Activated B cell treated with CpG ODN at 0.5 μM for 24 hours (primary cell): ENCODE measurements at regions of chr1 and their contacts with region 1.

Region 1: GRCh38 chr1:42846257-42847110 is at the start of gene ZNF691:
- DNase-seq: peak; percentile 63
- ATAC-seq: peak; percentile 97
- H3K4me3 Mint-ChIP-seq: peak within 1 kb of the TSS; percentile 94
- H3K27ac Mint-ChIP-seq: peak within 1 kb of the TSS; percentile 83
- H3K4me1 Mint-ChIP-seq: peaks cover 43% of the 10 kb centered on the region
- H3K27me3 Mint-ChIP-seq: no peaks in the 10 kb centered on the region
- CTCF ChIP-seq: no peak
- total RNA-seq, gene ZNF691: 13.1 and 16.1 TPM in 2 replicates

Region 2: DNA sequence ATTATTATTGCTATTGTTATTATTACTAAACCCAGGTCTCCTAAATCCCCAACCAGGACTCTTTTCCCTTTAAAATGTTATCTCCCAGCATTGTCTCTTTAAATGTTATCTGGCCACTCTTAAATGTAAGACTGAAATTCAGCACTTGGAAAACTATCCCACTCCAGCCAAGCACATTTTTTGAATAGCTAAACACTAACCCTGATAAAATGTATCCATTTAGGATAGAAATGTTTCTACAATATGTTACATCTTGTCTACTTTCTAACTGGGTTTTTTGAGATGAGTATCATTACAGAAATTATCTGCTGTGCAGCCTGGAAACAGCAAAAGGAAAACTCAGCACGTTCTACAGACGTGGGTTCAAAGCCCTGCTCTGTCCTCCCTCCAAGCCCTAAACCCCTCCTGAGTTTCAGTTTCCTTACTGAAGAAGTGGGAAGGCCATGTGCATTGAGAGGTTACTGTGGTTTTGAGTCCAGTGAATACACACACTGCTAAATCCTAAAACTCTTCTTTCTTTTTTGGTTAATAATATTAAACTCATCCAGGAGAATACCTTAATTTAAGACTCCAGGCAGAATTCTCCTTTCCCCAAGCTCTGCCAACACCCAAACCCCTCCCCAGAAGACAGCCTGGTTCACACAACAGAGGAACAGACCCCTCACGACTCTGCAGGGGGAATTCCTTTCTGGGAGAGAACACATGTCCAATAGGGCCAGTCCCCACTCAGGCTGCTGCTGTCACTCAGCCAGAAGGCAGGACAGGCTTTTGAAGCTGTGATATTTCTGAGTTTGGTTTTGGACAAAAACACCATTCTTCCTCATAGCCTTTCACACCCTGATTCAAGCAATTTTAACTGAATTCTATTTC is 969.7 kb before region 1 on chr1:
- CTCF ChIA-PET with region 1: no interaction called
- POLR2A ChIA-PET with region 1: no interaction called
- intact Hi-C with region 1: no loop called
- DNase-seq: no peak
- ATAC-seq: no peak
- H3K4me3 Mint-ChIP-seq: no peak overlapping the region
- H3K27ac Mint-ChIP-seq: no peak overlapping the region
- H3K4me1 Mint-ChIP-seq: no peaks in the 10 kb centered on the region
- H3K27me3 Mint-ChIP-seq: no peaks in the 10 kb centered on the region
- CTCF ChIP-seq: no peak

Region 3: DNA sequence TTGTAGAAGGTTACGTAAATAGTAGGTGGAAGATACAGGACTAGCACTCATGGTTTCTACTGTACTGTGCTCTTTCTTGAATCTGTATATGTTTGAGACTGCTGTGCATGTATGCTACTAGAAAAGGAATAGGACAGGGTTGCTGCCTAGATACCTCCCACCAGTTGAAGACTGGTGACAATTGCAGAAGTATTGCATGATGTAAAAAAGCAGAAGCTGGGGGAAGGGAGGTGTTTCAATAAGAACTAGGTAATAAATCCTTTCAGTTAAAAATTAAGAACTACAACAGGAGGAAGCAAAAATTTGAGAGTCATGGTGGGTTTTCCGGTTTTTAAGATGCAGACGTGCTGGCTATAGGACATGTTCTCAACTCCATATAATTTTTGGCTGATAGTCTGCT is 295.3 kb before region 1 on chr1:
- CTCF ChIA-PET with region 1: no interaction called
- POLR2A ChIA-PET with region 1: no interaction called
- intact Hi-C with region 1: no loop called
- DNase-seq: no peak
- ATAC-seq: peak; percentile 70
- H3K4me3 Mint-ChIP-seq: no peak overlapping the region
- H3K27ac Mint-ChIP-seq: no peak overlapping the region
- H3K4me1 Mint-ChIP-seq: peaks cover 4% of the 10 kb centered on the region
- H3K27me3 Mint-ChIP-seq: peaks cover 4% of the 10 kb centered on the region
- CTCF ChIP-seq: no peak

Region 4: GRCh38 chr1:42816585-42817434 is 29.7 kb before region 1 on chr1 and contains the starts of genes ERMAP and SVBP:
- CTCF ChIA-PET with region 1: no interaction called
- POLR2A ChIA-PET with region 1: interaction called, 16 read pairs
- intact Hi-C with region 1: loop called (anchors 1 kb)
- DNase-seq: peak; percentile 97
- ATAC-seq: peak; percentile 88
- H3K4me3 Mint-ChIP-seq: peak within 1 kb of the TSS; percentile 86
- H3K27ac Mint-ChIP-seq: peak within 1 kb of the TSS; percentile 86
- H3K4me1 Mint-ChIP-seq: peaks cover 20% of the 10 kb centered on the region
- H3K27me3 Mint-ChIP-seq: no peaks in the 10 kb centered on the region
- CTCF ChIP-seq: no peak
- total RNA-seq, gene ERMAP: 7.1 and 10.7 TPM in 2 replicates
- total RNA-seq, gene SVBP: 21.5 and 22.4 TPM in 2 replicates

Region 5: DNA sequence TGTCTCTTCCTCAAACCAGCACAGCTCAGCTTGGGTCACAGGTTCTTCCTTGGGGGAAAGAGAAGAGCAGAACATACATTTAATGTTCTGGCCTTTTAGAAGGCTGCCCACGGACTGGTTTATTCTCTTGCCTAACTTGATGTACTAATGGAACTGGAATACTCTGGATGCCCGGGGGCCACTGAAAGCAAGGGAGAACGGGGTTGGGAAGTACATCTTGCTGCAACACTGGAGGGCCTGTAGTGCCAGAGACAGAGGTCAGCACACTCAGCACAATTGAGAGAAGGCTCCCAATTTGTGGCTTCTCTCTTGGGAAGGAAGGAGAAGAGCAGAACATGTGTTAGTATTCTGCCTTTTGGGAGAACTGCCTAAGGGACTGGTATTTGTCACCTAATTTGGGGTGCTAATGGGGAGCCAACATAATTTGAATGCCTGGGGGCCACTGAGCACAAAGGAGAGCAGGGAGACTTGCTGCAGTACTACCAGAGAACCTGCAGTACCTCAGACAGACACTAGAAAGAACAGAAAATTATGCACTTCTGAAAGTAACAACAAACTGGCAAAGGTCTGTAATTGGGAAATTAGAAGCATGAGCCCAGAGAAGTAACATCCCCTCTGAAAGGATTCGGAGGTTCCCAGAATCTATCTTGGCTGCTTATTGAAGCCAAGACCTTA is 14.0 kb after region 1 on chr1:
- CTCF ChIA-PET with region 1: interaction called, 3 read pairs
- POLR2A ChIA-PET with region 1: interaction called, 12 read pairs
- intact Hi-C with region 1: no loop called
- DNase-seq: no peak
- ATAC-seq: no peak
- H3K4me3 Mint-ChIP-seq: no peak overlapping the region
- H3K27ac Mint-ChIP-seq: no peak overlapping the region
- H3K4me1 Mint-ChIP-seq: no peaks in the 10 kb centered on the region
- H3K27me3 Mint-ChIP-seq: peaks cover 24% of the 10 kb centered on the region
- CTCF ChIP-seq: no peak

Region 6: DNA sequence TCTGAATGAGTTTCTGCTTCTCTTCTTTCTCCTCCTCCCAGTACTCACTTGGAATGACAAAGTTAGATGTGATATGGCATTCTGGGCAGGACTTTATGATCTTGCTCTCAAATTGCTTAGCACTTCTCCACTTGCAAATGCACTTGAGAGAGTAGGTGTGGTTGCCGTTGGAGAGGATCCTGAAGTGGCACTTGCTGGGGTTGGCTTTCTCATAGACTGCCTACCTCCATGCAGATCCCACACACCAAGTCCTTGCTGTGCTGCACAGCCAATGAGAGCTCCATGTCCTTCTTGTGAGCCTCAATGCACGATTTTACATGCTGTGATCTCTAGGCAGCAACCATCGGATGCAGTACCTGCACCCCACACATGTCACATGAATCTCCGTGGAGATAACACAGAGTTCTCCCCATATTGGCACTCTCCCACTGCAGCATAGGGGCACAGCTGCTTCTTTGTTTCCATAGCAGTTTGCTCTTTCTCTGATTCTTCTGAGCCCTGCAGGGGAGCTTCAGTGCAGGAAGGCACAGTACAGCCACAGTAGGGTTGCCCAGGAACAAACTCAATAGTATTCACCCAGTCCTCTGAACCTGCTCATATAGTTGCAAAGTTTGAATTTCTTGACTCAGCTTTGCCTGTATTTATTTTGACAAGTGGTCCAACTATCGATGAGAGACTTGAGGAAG is 45.1 kb after region 1 on chr1:
- CTCF ChIA-PET with region 1: no interaction called
- POLR2A ChIA-PET with region 1: no interaction called
- intact Hi-C with region 1: no loop called
- DNase-seq: no peak
- ATAC-seq: no peak
- H3K4me3 Mint-ChIP-seq: no peak overlapping the region
- H3K27ac Mint-ChIP-seq: no peak overlapping the region
- H3K4me1 Mint-ChIP-seq: no peaks in the 10 kb centered on the region
- H3K27me3 Mint-ChIP-seq: peaks cover 6% of the 10 kb centered on the region
- CTCF ChIP-seq: no peak